RWPE1 (cell line): ENCODE measurements at regions of chr6 and their contacts with region 1.

Region 1: DNA sequence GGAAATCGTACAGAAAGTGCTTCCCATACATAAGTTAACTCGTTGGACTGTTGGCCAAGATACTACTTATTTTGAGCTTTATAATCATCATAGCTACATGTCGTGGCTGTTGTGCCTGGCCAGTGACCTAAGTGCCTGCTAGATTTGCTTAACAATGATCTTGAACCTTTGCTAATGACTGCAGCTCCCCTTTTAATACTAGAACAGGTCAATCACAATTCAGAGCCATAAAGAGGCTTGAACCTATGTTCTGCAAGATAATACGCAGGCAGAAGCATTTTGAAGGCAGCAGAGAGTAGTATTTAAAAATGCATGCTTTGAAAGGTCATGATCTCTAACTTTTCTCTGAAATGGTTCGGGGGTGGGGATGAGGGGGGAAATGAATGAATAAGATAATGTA is 2.5 kb downstream of the MRS2 start:
- DNase-seq: no peak
- H3K27ac ChIP-seq: no peak overlapping the region
- CTCF ChIP-seq: no peak

Region 2: DNA sequence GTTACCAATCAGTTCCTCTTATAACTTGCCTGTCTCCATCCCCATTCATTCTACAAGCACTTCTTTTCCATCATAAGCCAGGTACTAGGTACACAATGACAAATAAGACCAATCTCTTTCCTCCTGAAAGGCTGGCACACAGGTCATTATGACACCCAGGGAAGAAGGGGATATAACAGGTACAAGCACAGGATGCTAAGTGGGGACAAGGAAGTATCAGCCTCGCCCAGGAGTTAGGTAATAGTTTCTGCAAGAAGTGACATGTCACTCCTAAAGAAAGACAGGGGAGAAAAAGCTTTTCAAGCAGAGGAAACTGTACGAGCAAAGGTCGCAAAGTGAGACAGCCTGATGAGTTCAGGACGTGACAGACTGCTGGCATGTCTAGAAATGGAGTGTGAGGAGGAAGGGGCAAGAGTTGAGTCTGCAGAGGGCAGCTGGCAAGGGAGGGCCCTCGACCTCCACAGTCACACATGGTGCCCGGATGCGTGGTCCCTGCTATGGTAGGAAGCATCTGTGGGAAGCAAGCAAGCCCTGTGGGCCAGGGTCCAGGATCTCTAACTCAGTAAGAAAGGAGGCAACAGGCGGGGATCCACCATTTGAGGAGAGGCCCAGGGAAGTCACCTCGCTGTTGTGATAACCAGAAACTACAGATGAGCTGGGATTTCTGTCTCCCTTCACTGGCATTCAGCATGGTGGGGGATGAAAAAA is 43.7 kb after region 1 on chr6:
- CTCF ChIA-PET with region 1: no interaction called
- POLR2A ChIA-PET with region 1: interaction called, 11 read pairs
- DNase-seq: no peak
- H3K27ac ChIP-seq: no peak overlapping the region
- CTCF ChIP-seq: no peak

Region 3: DNA sequence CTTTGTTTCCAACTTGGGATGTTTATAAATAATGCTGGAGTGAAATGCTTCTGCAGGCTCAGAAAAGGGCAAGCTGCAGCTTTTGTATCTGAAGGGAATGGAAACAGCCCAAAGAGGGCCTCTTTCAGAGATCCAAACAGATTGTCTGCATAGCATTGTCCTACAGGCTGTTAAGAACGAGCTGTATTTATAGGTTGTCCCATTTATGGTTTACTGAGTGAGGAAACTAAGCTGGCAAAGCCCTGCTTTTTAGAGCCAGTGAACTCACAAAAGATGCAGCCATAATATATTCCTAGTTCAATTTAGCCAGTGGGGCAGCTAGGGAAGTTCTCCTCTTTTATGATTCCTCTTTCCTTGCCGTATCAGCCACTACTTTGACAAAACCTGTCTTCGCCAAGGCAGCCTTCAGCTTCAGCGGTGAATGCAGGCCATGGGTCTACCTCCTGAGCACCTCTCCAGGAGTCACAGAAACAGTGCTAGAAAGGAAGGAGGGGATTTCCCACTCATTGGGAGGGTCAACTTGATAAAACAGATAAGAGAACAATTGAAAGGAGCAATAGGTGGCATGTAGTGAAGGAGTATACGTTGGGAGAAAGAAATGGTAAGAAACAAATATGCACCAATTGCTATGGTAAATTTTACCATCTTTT is 225.7 kb after region 1 on chr6:
- CTCF ChIA-PET with region 1: no interaction called
- POLR2A ChIA-PET with region 1: no interaction called
- DNase-seq: no peak
- H3K27ac ChIP-seq: no peak overlapping the region
- CTCF ChIP-seq: no peak

Region 4: DNA sequence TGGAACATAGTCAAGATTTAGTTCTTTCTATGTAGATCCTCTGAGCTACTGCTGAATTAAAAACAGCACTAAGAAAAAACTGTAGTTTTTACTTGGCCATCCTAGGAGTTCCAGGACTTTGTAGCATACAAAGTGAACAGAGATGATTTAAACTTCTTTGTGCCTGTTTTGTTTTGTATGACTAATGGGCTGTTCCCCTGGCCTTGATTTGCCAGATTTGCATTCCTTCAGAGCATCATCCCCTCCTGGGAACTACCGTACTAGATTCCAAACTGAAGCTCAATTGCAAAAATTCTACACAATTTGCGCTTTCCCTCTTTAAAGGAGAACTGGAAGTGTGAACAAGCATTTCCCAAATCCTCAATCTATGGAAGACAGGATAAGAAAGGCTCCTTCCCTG is 284.7 kb after region 1 on chr6:
- CTCF ChIA-PET with region 1: no interaction called
- POLR2A ChIA-PET with region 1: no interaction called
- DNase-seq: no peak
- H3K27ac ChIP-seq: no peak overlapping the region
- CTCF ChIP-seq: no peak